ENCODE measurements at regions of chr2 and their contacts with region 1.

Region 1: GRCh38 chr2:176140513-176141317 is 10.6 kb upstream of the HOXD4 start:
- DNase-seq: peak; percentile 86

Region 2: GRCh38 chr2:175630280-175631244 is 510.2 kb before region 1 on chr2:
- in situ Hi-C with region 1: no loop called
- DNase-seq: no peak

Region 3: GRCh38 chr2:176445956-176446355 is 305.2 kb after region 1 on chr2:
- in situ Hi-C with region 1: loop called (anchors 25 kb)
- DNase-seq: no peak

Region 4: DNA sequence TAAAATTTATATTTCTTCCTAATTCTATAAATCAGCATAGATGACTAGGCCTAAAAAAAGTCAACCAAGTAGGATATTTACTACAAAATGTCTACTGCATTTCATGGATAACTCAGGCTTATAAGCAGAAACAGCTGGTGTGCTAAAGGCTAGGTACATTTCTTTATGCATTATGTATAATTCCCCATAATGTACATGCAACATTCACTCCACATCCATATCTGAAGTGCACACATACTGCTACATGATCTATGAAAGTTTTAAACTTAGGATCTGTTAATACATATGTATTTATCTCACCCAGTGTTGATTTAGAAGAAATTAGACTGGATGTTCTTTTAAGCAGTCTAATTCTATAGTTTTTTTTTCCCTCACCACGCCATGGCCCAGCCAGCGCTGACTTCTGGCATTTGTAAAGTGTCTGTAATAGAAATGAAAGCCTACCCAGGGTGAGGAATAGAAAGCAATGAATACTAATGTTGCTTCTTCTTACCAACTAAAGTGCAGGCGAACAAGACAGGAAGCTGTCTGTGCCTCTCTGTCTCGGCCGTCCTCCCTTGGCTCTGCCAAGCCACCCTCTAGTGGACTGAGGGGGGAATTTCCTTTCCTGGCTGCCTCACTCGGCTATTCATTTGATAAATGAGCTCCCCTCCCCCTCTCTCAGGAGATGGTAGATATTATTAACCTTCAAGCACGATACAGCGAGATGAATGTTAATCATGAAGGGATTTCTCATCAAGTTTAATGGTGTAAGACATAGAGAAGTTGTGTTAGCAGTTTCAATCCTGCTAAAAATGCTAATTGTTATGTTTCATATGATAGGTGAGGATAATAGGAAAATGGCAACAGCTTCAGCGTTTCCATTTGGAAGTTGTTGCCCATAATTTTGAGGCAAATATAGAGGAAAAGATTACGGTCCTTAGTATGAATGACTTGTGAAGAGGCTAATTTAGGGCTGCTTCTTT is 513.0 kb after region 1 on chr2:
- in situ Hi-C with region 1: loop called (anchors 25 kb)
- DNase-seq: peak; percentile 91